IMR-90 (cell line): ENCODE measurements at regions of chr11 and their contacts with region 1.

Region 1: DNA sequence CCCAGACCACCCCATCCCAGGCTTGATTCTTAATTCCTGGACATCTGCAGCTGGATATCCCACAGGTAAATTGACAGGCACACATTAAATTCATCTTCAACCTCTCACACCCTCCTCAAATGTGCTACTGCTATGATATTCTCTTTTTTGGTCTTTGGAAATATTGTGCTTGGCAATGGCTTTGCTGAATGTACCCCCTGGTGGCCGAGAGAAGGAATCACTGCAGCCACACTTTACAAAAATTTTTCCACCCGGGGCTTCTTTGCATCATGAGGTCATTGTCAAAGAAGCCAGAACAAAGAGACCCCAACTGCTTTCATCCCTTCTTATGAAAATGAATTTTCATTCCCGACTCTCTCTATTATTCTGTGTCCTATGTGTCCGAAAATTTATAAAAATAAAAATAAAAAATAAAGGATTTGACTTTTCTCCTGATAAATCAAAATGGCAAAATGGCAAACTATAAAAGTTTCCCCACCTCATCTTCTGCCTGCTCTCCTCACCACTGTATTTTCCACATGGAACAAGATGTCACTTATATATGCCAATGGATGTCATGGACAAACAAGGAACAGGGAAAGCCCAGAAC is 15.0 kb upstream of the CYB5R2 start:
- DNase-seq: peak; percentile 31
- ATAC-seq: peak; percentile 82
- H3K4me3 ChIP-seq: no peak overlapping the region
- H3K27ac ChIP-seq: no peak overlapping the region
- H3K4me1 ChIP-seq: 0 out of 2 replicates have a peak, but pooled peaks cover 2% of the 10 kb centered on the region
- H3K27me3 ChIP-seq: peaks cover 17% of the 10 kb centered on the region
- CTCF ChIP-seq: peak; percentile 77
- POLR2A ChIP-seq: no peak
- RAD21 ChIP-seq: peak; percentile 60

Region 2: DNA sequence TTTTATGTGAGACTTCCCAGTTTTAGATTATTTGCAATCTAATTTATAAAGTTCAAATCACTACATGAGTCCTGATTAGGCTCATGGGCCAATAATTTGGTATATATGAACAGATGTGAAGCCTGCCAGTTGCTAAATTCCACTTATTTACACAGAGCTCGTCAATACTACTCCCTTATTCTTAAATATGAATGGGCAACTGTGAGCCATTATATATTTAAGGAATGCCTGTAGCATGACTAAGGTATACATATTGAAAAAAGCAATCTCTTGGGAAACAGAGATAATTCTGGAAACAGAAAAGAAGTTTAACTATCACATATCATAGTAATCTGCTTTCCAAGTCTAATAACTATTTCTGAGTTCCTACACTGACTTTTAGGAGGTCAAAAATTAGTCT is 572.6 kb before region 1 on chr11:
- CTCF ChIA-PET with region 1: no interaction called
- POLR2A ChIA-PET with region 1: no interaction called
- dilution Hi-C with region 1: no loop called
- in situ Hi-C with region 1: loop called (anchors 25 kb)
- intact Hi-C with region 1: no loop called
- DNase-seq: peak; percentile 43
- ATAC-seq: peak; percentile 48; the same call in 1 of the 2 replicates
- H3K4me3 ChIP-seq: no peak overlapping the region
- H3K27ac ChIP-seq: no peak overlapping the region
- H3K4me1 ChIP-seq: no peaks in the 10 kb centered on the region
- H3K27me3 ChIP-seq: no peaks in the 10 kb centered on the region
- CTCF ChIP-seq: no peak
- POLR2A ChIP-seq: no peak
- RAD21 ChIP-seq: no peak

Region 3: DNA sequence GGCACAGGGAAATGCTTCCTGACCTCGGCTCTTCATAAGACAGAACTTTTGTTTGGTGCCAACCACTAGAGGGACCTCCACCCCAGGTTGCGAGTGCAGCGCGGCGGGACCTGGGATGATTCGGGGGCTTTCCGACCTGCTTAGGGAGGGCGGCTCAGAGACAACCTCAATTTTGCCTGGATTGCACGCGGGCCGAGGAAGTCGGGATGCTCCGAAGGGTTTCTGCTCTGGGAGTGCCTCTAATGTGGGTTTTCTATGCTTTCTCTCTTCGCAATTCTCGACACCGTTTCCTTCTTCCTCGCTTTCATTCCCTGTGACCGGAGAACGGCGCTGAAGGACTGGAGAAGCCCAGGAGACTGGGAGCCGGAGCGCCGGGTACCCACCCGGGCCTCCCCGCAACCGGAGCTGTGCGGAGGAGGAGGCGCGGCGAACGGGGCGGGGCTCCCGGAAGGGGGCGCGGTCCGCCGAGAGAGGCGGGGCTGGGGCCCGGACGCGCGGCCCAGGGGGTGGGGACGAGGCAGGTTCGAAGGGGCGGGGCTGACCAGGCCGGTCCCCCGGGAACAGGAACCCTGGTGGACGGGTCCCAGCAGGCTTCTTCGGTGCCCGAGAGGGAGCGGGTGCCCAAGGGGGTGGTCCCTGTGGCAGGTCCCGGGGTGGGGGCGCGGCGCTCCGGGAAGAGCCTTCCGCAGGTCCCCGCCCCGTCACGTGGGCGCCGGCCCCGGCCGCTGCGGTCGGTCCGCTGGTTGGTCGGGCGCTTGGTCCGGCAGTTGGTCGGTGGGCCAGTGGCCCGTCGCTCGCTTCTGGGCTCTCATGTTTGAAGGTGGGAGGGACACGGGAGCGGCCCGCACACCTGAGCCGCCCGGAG is 174.9 kb before region 1 on chr11 and contains the start of gene PPFIBP2:
- CTCF ChIA-PET with region 1: interaction called, 4 read pairs
- POLR2A ChIA-PET with region 1: no interaction called
- dilution Hi-C with region 1: no loop called
- in situ Hi-C with region 1: no loop called
- intact Hi-C with region 1: loop called (anchors 1 kb)
- DNase-seq: peak; percentile 47
- ATAC-seq: peak; percentile 98
- H3K4me3 ChIP-seq: peak within 1 kb of the TSS; percentile 58
- H3K27ac ChIP-seq: no peak within 1 kb of the TSS
- H3K4me1 ChIP-seq: peaks cover 2% of the 10 kb centered on the region; the same call in 1 of the 2 replicates
- H3K27me3 ChIP-seq: peaks cover 27% of the 10 kb centered on the region
- CTCF ChIP-seq: peak; percentile 60
- POLR2A ChIP-seq: no peak
- RAD21 ChIP-seq: peak; percentile 52
- total RNA-seq, gene PPFIBP2: 9.4 and 11.8 TPM in 2 replicates

Region 4: GRCh38 chr11:7793233-7793632 is 104.9 kb after region 1 on chr11:
- CTCF ChIA-PET with region 1: no interaction called
- POLR2A ChIA-PET with region 1: no interaction called
- dilution Hi-C with region 1: no loop called
- in situ Hi-C with region 1: no loop called
- intact Hi-C with region 1: no loop called
- DNase-seq: no peak
- ATAC-seq: no peak
- H3K4me3 ChIP-seq: no peak overlapping the region
- H3K27ac ChIP-seq: no peak overlapping the region
- H3K4me1 ChIP-seq: no peaks in the 10 kb centered on the region
- H3K27me3 ChIP-seq: no peaks in the 10 kb centered on the region
- CTCF ChIP-seq: no peak
- POLR2A ChIP-seq: no peak
- RAD21 ChIP-seq: no peak

Region 5: DNA sequence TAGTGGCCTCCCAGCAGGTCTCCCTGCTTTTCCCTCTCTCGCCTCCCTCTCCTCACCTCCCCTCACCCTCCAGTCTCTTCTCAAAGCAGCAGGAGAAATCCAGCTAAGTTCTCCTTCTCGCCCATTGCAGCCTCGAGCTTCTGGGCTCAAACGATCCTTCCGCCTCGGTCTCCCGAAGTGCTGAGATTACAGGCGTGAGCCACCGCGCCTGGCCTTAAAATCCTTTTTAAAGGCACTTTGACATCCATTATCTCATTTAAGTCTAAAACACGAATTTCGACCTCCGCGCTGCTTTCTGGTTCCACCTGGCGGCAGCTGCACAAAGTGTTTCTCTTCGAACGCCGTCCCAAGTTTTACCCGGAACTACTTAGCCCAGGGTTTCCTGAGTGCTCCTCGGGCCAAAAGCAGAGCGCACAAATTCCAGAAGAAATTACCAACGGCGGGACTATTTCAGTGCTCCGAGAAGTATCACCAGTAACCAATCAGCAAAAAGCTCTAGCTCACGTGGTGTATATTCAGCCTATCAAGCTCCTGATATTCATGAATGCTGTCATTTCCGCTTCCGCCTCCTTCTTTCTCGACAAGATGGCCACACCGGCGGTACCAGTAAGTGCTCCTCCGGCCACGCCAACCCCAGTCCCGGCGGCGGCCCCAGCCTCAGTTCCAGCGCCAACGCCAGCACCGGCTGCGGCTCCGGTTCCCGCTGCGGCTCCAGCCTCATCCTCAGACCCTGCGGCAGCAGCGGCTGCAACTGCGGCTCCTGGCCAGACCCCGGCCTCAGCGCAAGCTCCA is 298.6 kb after region 1 on chr11 and contains the start of gene EIF3F:
- CTCF ChIA-PET with region 1: no interaction called
- POLR2A ChIA-PET with region 1: no interaction called
- dilution Hi-C with region 1: no loop called
- in situ Hi-C with region 1: no loop called
- intact Hi-C with region 1: loop called (anchors 5 kb)
- DNase-seq: peak; percentile 100
- ATAC-seq: peak; percentile 98
- H3K4me3 ChIP-seq: peak within 1 kb of the TSS; percentile 97
- H3K27ac ChIP-seq: peak within 1 kb of the TSS; percentile 81
- H3K4me1 ChIP-seq: peaks cover 7% of the 10 kb centered on the region
- H3K27me3 ChIP-seq: no peaks in the 10 kb centered on the region
- CTCF ChIP-seq: peak; percentile 96
- POLR2A ChIP-seq: 0 out of 2 replicates have a peak, but pooled peaks have one; percentile 13
- RAD21 ChIP-seq: peak; percentile 93
- total RNA-seq, gene EIF3F: 279 and 308 TPM in 2 replicates